ENCODE measurements at regions of chr1 and their contacts with region 1.

Region 1: DNA sequence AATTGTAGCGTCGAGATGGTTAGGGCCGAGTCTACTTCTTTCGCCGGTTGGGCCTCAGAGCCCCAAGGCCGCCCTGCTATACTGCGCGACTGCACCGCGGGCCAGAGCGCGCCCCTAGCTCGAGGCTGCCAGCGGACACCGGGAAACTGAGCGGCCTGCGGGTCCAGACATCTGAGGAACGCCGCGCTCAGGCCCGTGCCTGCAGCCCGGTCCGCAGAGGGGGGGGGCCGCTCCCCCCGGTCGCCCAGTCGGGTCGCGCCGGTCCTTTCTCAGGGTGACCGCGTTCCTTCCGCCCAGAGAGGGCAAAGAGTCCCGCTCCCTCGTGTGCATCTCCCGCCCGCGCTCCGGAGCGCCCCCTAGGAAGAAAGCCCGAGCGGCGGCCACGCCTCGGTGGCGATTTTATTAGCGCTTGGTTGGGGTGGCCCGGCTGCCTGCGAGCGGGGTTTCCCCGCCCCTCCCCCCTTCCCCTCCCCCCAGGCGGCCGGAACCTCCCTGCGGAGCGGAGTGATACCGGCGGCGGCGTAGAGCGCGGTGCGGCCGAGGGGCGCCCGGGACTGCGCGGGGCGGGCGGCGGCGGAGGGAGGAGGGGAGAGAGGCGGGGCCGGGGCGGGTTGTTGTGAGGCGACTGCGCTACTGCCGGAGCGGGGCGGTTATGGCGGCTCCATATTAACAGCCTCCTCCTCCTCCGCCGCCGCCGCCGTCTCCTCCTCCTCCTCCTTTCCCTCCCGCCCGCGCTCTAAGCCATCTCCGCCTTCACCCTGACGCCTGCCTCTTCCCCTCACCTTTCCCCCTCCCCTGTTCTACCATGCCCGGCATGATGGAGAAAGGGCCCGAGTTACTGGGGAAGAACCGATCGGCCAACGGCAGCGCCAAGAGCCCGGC is at the start of gene RCOR3:
- DNase-seq: peak; percentile 87 to 91 (median 89)
- H3K4me3 ChIP-seq: peak within 1 kb of the TSS; percentile 70 to 75
- H3K4me3 Mint-ChIP-seq: peak within 1 kb of the TSS; percentile 87 to 96 (median 91)
- H3K27ac ChIP-seq: peak within 1 kb of the TSS; percentile 77
- H3K27ac Mint-ChIP-seq: peak within 1 kb of the TSS; percentile 89 to 98 (median 92)
- H3K4me1 ChIP-seq: peaks cover 21% of the 10 kb centered on the region
- H3K4me1 Mint-ChIP-seq: peaks cover 10 to 26% (median 18%) of the 10 kb centered on the region in 4 donors
- H3K27me3 ChIP-seq: no peaks in the 10 kb centered on the region
- H3K27me3 Mint-ChIP-seq: no peaks in the 10 kb centered on the region
- total RNA-seq, gene RCOR3: 69.5 to 74.7 TPM

Region 2: DNA sequence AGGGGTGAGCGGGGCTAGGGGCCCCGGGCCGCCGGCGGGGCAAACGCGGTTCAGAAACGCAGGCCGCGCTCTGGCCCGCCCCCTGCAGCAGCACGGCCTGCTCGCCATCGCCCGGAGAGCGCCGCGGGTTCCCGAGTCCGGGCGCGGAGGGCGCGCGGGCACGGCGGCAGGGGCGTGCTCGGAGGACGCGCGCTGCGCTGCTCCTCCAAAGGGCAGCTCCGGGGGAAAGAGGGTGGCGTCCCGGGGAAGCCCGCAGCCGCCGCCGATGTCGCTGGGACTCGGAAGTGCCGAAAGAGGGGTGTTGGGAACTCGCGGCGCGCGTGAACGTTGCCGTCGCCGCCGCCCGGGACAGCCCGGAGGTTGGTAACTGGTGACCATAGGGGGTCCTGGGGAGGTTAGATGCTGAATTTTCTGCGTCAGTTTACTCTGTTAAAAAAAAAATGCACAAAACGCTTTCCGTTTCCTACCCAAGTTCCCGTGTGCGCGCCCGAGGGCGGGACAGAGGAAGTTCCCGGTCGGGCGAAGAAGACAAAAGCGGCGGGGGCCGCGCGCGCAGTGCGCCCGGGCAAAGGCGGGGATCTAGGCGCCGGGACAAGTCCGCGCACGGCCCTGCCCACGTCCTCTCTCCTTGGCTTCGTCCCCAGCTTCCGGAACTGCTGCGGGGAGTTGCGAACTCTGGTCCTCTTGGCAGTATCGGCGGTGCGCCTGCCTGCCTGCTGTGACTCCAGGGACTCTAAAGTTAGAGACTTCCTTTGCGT is 930.1 kb before region 1 on chr1 and contains the start of gene HHAT:
- CTCF ChIA-PET with region 1: no interaction called
- POLR2A ChIA-PET with region 1: no interaction called
- intact Hi-C with region 1: loop called (anchors 5 kb)
- DNase-seq: peak; percentile 63 to 70 (median 68)
- H3K4me3 ChIP-seq: peak within 1 kb of the TSS; percentile 50 to 75
- H3K4me3 Mint-ChIP-seq: peak within 1 kb of the TSS; percentile 94 to 99 (median 97)
- H3K27ac ChIP-seq: peak within 1 kb of the TSS; percentile 73
- H3K27ac Mint-ChIP-seq: peak within 1 kb of the TSS; percentile 83 to 98 (median 95)
- H3K4me1 ChIP-seq: peaks cover 53% of the 10 kb centered on the region
- H3K4me1 Mint-ChIP-seq: peaks cover 30 to 52% (median 42%) of the 10 kb centered on the region in 4 donors
- H3K27me3 ChIP-seq: no peaks in the 10 kb centered on the region
- H3K27me3 Mint-ChIP-seq: peaks cover 0 to 4% of the 10 kb centered on the region in 2 donors
- total RNA-seq, gene HHAT: 6.5 to 6.8 TPM

Region 3: GRCh38 chr1:210448297-210448892 is 810.6 kb before region 1 on chr1:
- CTCF ChIA-PET with region 1: no interaction called
- POLR2A ChIA-PET with region 1: interaction called, 3 read pairs
- intact Hi-C with region 1: loop called (anchors 1 kb)
- DNase-seq: peak in 4 of 5 donors; percentile 10 to 18 (median 12)
- H3K4me3 ChIP-seq: no peak overlapping the region
- H3K4me3 Mint-ChIP-seq: no peak overlapping the region
- H3K27ac ChIP-seq: no peak overlapping the region
- H3K27ac Mint-ChIP-seq: no peak overlapping the region
- H3K4me1 ChIP-seq: peaks cover 14% of the 10 kb centered on the region
- H3K4me1 Mint-ChIP-seq: peaks cover 7 to 19% (median 12%) of the 10 kb centered on the region in 4 donors
- H3K27me3 ChIP-seq: no peaks in the 10 kb centered on the region
- H3K27me3 Mint-ChIP-seq: peaks cover 0 to under 1% of the 10 kb centered on the region in 2 donors

Region 4: GRCh38 chr1:211229365-211229759 is 29.6 kb before region 1 on chr1:
- CTCF ChIA-PET with region 1: interaction called, 4 read pairs
- POLR2A ChIA-PET with region 1: interaction called, 16 read pairs
- intact Hi-C with region 1: loop called (anchors 1 kb)
- DNase-seq: no peak
- H3K4me3 ChIP-seq: peak overlapping the region in 1 of 2 donors; percentile 1
- H3K4me3 Mint-ChIP-seq: peak overlapping the region; percentile 69 to 85 (median 78)
- H3K27ac ChIP-seq: peak overlapping the region; percentile 9
- H3K27ac Mint-ChIP-seq: peak overlapping the region; percentile 50 to 95 (median 82)
- H3K4me1 ChIP-seq: peaks cover 17% of the 10 kb centered on the region
- H3K4me1 Mint-ChIP-seq: peaks cover 20 to 29% (median 22%) of the 10 kb centered on the region in 4 donors
- H3K27me3 ChIP-seq: no peaks in the 10 kb centered on the region
- H3K27me3 Mint-ChIP-seq: no peaks in the 10 kb centered on the region

Region 5: GRCh38 chr1:211578640-211579433 is 319.8 kb after region 1 on chr1 and contains the start of gene SLC30A1:
- CTCF ChIA-PET with region 1: no interaction called
- POLR2A ChIA-PET with region 1: interaction called, 4 read pairs
- intact Hi-C with region 1: loop called (anchors 1 kb)
- DNase-seq: peak; percentile 99
- H3K4me3 ChIP-seq: peak within 1 kb of the TSS; percentile 72 to 86
- H3K4me3 Mint-ChIP-seq: peak within 1 kb of the TSS; percentile 90 to 96 (median 92)
- H3K27ac ChIP-seq: peak within 1 kb of the TSS; percentile 76
- H3K27ac Mint-ChIP-seq: peak within 1 kb of the TSS; percentile 86 to 97 (median 93)
- H3K4me1 ChIP-seq: peaks cover 42% of the 10 kb centered on the region
- H3K4me1 Mint-ChIP-seq: peaks cover 23 to 56% (median 36%) of the 10 kb centered on the region in 4 donors
- H3K27me3 ChIP-seq: no peaks in the 10 kb centered on the region
- H3K27me3 Mint-ChIP-seq: peaks cover 0 to 2% of the 10 kb centered on the region in 2 donors
- total RNA-seq, gene SLC30A1: 10.1 to 10.6 TPM

Measured in CD4-positive, alpha-beta memory T cell (primary cell).